Panc1 (cell line): ENCODE measurements at regions of chr14 and their contacts with region 1.

Region 1: GRCh38 chr14:85634205-85634604 is 104.3 kb downstream of the FLRT2 start:
- DNase-seq: no peak
- ATAC-seq: no peak
- H3K4me3 ChIP-seq: no peak overlapping the region
- H3K27ac ChIP-seq: no peak overlapping the region
- H3K4me1 ChIP-seq: no peaks in the 10 kb centered on the region
- H3K27me3 ChIP-seq: no peaks in the 10 kb centered on the region
- CTCF ChIP-seq: no peak

Region 2: DNA sequence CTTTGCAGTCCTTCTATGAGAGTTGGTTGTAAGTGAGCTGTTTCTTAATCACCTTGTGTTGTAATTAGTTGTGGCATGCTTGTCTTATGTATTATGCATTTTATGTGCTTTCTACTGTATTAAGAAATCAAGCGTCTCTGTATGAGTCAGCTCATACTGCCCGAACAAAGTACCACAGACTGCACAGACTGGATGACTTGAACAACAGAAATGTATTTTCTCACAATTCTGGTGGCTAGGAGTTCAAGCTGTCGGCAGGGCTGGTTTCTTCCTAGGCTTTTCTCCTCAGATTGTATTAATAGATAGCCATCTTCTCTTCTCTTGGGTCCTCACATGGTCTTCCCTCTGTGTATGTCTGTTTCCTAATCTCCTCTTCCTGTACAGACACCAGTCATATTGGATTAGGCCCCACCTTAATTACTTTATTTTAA is 26.5 kb before region 1 on chr14:
- CTCF ChIA-PET with region 1: no interaction called
- POLR2A ChIA-PET with region 1: no interaction called
- in situ Hi-C with region 1: no loop called
- intact Hi-C with region 1: no loop called
- DNase-seq: peak; percentile 60
- ATAC-seq: no peak
- H3K4me3 ChIP-seq: no peak overlapping the region
- H3K27ac ChIP-seq: no peak overlapping the region
- H3K4me1 ChIP-seq: no peaks in the 10 kb centered on the region
- H3K27me3 ChIP-seq: no peaks in the 10 kb centered on the region
- CTCF ChIP-seq: no peak

Region 3: DNA sequence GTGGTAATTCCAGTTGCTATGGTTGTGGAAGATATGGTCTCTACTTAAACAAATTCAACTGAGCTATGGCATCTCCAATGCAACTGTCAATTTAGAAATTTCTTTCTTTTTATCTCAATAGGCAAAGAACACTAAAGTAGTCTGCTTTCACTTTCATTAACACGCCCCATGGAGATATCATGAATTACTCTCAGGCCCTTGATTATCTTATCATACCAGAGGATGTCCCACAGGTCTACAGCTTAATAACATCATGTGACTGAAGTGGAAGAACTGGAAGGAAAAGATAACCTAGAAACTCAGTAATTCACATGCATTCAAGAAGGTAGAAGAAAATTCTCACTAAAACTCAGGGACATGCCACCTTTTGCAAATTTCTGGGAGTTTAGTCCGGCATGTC is 10.0 kb after region 1 on chr14:
- CTCF ChIA-PET with region 1: no interaction called
- POLR2A ChIA-PET with region 1: interaction called, 12 read pairs
- in situ Hi-C with region 1: no loop called
- intact Hi-C with region 1: no loop called
- DNase-seq: no peak
- ATAC-seq: no peak
- H3K4me3 ChIP-seq: no peak overlapping the region
- H3K27ac ChIP-seq: no peak overlapping the region
- H3K4me1 ChIP-seq: no peaks in the 10 kb centered on the region
- H3K27me3 ChIP-seq: no peaks in the 10 kb centered on the region
- CTCF ChIP-seq: no peak